ENCODE measurements at regions of chr1 and their contacts with region 1.

Region 1: DNA sequence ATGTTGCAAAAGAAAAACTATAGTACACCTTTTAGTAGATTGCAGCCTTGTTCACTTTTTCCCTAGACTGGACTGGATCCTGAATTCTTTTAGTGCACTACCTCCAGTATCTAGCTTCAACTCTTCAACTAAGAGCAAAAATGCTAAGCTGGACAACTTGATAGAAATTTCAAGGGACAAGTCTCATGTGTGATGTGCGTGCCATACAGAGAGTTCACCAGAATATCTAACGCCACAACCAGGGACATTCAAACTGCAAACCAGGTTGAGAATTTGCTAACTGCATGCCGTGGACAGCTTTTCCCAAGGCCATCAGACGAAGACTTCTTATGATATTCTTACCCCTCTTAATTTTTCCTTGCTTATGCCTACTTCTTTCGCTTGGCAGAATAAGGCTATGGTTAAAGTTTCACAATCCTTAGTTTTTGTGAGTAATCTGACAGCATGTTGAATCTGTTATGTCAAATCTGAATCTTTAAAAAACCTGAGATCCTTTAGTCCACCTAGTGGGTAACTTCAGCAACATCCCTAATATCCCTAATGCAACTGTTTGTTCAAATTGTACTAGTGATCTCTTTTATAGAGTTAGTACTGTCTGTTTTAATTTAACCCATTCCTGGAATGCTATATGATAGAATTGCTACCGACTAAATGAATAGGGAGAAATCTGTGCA is 66.4 kb downstream of the DDAH1 start:
- DNase-seq: no peak
- ATAC-seq: no peak
- H3K4me3 ChIP-seq: no peak overlapping the region
- H3K27ac ChIP-seq: peak overlapping the region in 1 of 2 donors; percentile 28
- H3K4me1 ChIP-seq: no peaks in the 10 kb centered on the region
- H3K27me3 ChIP-seq: no peaks in the 10 kb centered on the region

Region 2: GRCh38 chr1:85172684-85173337 is 225.7 kb before region 1 on chr1:
- intact Hi-C with region 1: no loop called
- DNase-seq: no peak
- ATAC-seq: no peak
- H3K4me3 ChIP-seq: no peak overlapping the region
- H3K27ac ChIP-seq: no peak overlapping the region
- H3K4me1 ChIP-seq: peaks cover 0 to 3% of the 10 kb centered on the region in 2 donors
- H3K27me3 ChIP-seq: no peaks in the 10 kb centered on the region

Region 3: GRCh38 chr1:85313888-85314696 is 84.4 kb before region 1 on chr1:
- intact Hi-C with region 1: loop called in 1 of 2 experiments (anchors 5 kb)
- DNase-seq: peak in 1 of 2 donors; percentile 56
- ATAC-seq: peak; percentile 85
- H3K4me3 ChIP-seq: no peak overlapping the region
- H3K27ac ChIP-seq: peak overlapping the region; percentile 36 to 83
- H3K4me1 ChIP-seq: peaks cover 6 to 9% of the 10 kb centered on the region in 2 donors
- H3K27me3 ChIP-seq: no peaks in the 10 kb centered on the region